CD4-positive, alpha-beta T cell (primary cell): ENCODE measurements at regions of chr5 and their contacts with region 1.

Region 1: GRCh38 chr5:115169487-115170133 is at the start of gene TRIM36:
- DNase-seq: peak; percentile 66 to 92 (median 82)
- ATAC-seq: peak; percentile 90
- H3K4me3 ChIP-seq: peak within 1 kb of the TSS; percentile 69
- H3K4me3 Mint-ChIP-seq: peak within 1 kb of the TSS; percentile 85
- H3K27ac ChIP-seq: no peak within 1 kb of the TSS
- H3K27ac Mint-ChIP-seq: no peak within 1 kb of the TSS
- H3K4me1 ChIP-seq: peaks cover 22% of the 10 kb centered on the region
- H3K4me1 Mint-ChIP-seq: peaks cover 15% of the 10 kb centered on the region
- H3K27me3 ChIP-seq: peaks cover 57 to 84% of the 10 kb centered on the region in 2 experiments
- H3K27me3 Mint-ChIP-seq: peaks cover 83% of the 10 kb centered on the region
- CTCF ChIP-seq: no peak
- total RNA-seq, gene TRIM36: 0.14 TPM in 1 of 2 experiments, not detected in the other

Region 2: GRCh38 chr5:114391321-114391720 is 778.3 kb before region 1 on chr5:
- CTCF ChIA-PET with region 1: no interaction called
- POLR2A ChIA-PET with region 1: no interaction called
- intact Hi-C with region 1: no loop called
- DNase-seq: no peak
- ATAC-seq: no peak
- H3K4me3 ChIP-seq: no peak overlapping the region
- H3K4me3 Mint-ChIP-seq: no peak overlapping the region
- H3K27ac ChIP-seq: no peak overlapping the region
- H3K27ac Mint-ChIP-seq: no peak overlapping the region
- H3K4me1 ChIP-seq: no peaks in the 10 kb centered on the region
- H3K4me1 Mint-ChIP-seq: no peaks in the 10 kb centered on the region
- H3K27me3 ChIP-seq: no peaks in the 10 kb centered on the region
- H3K27me3 Mint-ChIP-seq: no peaks in the 10 kb centered on the region
- CTCF ChIP-seq: no peak

Region 3: DNA sequence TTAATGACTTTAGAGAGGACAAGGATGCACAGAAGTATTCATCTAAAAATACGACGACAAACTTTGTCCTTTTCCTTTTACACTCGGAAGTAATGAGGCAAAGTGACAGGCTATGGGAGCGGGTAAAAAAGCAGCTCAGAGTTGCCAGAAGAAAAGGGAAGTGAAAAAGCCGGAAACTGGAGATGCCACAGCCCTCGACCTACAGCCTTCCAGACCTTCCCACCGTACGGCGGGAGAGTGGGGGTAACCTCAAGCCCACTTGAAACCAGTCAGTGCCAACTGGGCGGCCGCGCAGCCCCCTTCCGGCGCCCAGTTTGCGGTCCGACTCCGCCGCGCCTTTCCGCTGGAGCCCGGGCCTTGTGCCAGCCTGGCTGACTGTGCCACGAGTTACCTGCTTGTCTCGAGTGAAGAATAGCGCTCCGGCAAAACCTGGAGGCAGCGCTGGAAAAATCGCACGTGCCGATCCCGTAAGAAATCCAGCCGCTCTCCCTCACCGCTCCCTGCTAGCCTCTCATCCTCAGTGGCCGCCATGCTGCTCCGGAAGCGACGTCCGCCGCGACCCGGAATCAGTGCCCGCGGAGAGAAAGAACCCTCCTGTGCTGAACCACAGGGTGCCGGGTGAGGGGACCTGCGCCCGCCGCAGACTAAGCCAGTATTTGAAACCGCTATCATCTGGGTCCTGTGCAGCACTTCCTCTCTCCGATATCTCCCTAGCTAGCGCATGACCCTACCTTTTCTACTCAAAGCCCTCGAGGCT is 92.9 kb after region 1 on chr5 and contains the start of gene PGGT1B:
- CTCF ChIA-PET with region 1: no interaction called
- POLR2A ChIA-PET with region 1: no interaction called
- intact Hi-C with region 1: loop called in 1 of 2 experiments (anchors 5 kb)
- DNase-seq: peak; percentile 48 to 82 (median 64)
- ATAC-seq: peak; percentile 93
- H3K4me3 ChIP-seq: peak within 1 kb of the TSS; percentile 76
- H3K4me3 Mint-ChIP-seq: peak within 1 kb of the TSS; percentile 96
- H3K27ac ChIP-seq: peak within 1 kb of the TSS; percentile 52 to 72
- H3K27ac Mint-ChIP-seq: peak within 1 kb of the TSS; percentile 77
- H3K4me1 ChIP-seq: peaks cover 14% of the 10 kb centered on the region
- H3K4me1 Mint-ChIP-seq: peaks cover 53% of the 10 kb centered on the region
- H3K27me3 ChIP-seq: no peaks in the 10 kb centered on the region
- H3K27me3 Mint-ChIP-seq: no peaks in the 10 kb centered on the region
- CTCF ChIP-seq: no peak
- total RNA-seq, gene PGGT1B: 37.5 to 39.3 TPM